ENCODE measurements at regions of chr18 and their contacts with region 1.

Region 1: DNA sequence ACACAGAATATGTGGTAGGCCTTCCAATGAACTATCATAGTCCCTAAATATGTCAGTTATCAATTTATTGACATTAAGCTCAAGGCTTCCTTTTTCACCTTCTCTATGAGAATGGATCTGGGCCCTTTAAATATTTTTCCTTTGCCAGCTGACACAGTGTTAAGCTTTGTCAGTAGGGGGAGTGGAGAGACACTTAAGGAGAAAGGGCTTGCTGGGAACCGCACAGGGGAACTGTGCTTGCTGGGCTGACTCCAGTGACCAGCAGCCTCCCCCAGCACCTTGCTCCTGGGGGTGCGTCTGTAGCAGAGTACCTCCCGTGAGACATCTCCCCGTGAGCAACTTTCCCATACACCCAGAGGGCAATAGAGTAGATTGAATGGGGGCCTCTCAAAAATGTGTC is 6.5 kb upstream of the PTPN2 start:
- DNase-seq: no peak
- ATAC-seq: no peak
- H3K4me3 ChIP-seq: no peak overlapping the region
- H3K4me3 Mint-ChIP-seq: no peak overlapping the region
- H3K27ac ChIP-seq: no peak overlapping the region
- H3K27ac Mint-ChIP-seq: no peak overlapping the region
- H3K4me1 ChIP-seq: no peaks in the 10 kb centered on the region
- H3K4me1 Mint-ChIP-seq: peaks cover 7% of the 10 kb centered on the region
- H3K27me3 ChIP-seq: peaks cover 0 to 6% of the 10 kb centered on the region in 2 experiments
- H3K27me3 Mint-ChIP-seq: peaks cover 12% of the 10 kb centered on the region
- CTCF ChIP-seq: no peak

Region 2: GRCh38 chr18:12744103-12744502 is 146.4 kb before region 1 on chr18:
- CTCF ChIA-PET with region 1: interaction called, 41 read pairs
- POLR2A ChIA-PET with region 1: no interaction called
- intact Hi-C with region 1: loop called (anchors 1 kb)
- DNase-seq: peak in 2 of 9 experiments; percentile 58 to 69
- ATAC-seq: peak; percentile 63
- H3K4me3 ChIP-seq: no peak overlapping the region
- H3K4me3 Mint-ChIP-seq: no peak overlapping the region
- H3K27ac ChIP-seq: no peak overlapping the region
- H3K27ac Mint-ChIP-seq: no peak overlapping the region
- H3K4me1 ChIP-seq: no peaks in the 10 kb centered on the region
- H3K4me1 Mint-ChIP-seq: peaks cover 4% of the 10 kb centered on the region
- H3K27me3 ChIP-seq: no peaks in the 10 kb centered on the region
- H3K27me3 Mint-ChIP-seq: no peaks in the 10 kb centered on the region
- CTCF ChIP-seq: peak; percentile 51

Region 3: DNA sequence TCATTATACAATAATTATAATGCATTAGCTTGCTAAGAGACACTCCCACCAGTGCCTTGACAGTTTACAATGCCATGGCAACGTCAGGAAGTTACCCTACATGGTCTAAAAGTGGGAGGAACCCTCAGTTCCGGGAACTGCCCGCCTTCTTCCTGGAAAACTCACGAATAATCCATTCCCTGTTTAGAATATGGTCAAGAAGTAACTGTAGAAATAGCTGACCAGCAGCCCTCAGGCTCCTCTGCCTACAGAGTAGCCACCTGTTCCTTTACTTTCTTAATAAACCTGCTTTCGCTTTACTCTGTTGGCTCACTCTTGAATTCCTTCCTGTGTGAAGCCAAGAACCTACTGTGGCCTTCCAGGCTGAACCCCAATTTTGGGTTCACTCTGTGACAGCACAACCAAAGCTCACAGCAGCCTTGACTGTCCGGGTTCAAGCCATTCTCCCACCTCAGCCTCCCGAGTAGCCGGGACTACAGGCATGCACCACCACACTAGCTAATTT is 13.6 kb after region 1 on chr18:
- CTCF ChIA-PET with region 1: interaction called, 15 read pairs
- POLR2A ChIA-PET with region 1: interaction called, 5 read pairs
- intact Hi-C with region 1: no loop called
- DNase-seq: peak in 2 of 9 experiments; percentile 54 to 59
- ATAC-seq: peak; percentile 49
- H3K4me3 ChIP-seq: peak overlapping the region in 1 of 2 experiments; percentile 25
- H3K4me3 Mint-ChIP-seq: peak overlapping the region; percentile 74
- H3K27ac ChIP-seq: peak overlapping the region; percentile 26 to 71
- H3K27ac Mint-ChIP-seq: peak overlapping the region; percentile 86
- H3K4me1 ChIP-seq: peaks cover 4% of the 10 kb centered on the region
- H3K4me1 Mint-ChIP-seq: peaks cover 11% of the 10 kb centered on the region
- H3K27me3 ChIP-seq: no peaks in the 10 kb centered on the region
- H3K27me3 Mint-ChIP-seq: no peaks in the 10 kb centered on the region
- CTCF ChIP-seq: no peak

Region 4: DNA sequence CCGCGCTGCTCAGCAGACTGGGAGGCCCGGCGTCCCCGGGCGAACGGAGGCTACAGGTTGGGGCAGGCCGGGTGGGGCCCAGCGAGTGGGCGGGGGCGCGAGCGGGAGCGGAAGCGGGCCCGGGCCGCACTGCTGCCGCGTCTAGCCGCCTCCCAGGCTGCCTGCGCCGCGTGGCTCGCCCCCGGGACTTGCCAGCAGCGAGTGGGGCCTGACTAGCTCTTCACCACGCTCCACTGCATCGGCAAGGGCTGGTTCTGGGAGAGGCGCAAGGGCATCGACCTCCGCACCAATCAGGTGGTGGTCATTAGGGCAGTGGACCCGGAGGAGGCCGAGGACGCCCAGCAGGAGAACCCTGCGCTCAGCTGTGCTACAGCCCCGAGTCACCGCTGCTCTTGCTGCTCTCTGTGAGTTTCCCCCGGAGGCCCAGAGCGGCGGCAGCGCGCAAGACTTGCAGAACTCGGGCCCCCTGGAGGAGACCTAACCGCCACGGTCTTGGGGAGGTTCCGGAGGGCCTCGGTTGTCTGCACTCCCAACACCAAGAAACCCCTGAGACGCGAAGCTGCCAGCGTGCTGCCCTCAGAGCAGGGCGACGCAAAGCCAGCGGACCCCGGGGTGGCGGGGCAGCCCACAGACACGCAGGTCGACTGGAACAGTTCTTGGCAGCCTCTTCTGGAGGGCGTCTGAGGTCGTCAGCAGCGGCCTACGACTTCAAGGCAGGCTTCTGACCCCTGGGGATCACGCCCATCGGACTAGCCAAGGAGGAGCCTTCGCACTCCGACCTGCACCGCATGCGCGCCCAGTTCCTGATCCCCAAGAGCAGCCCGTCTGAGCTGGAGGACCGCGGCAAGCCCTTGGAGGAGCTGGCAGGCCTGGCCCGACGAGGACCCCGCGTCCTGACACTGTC is 20.8 kb after region 1 on chr18:
- CTCF ChIA-PET with region 1: interaction called, 14 read pairs
- POLR2A ChIA-PET with region 1: no interaction called
- intact Hi-C with region 1: no loop called
- DNase-seq: peak; percentile 17 to 81 (median 57)
- ATAC-seq: peak; percentile 92
- H3K4me3 ChIP-seq: peak overlapping the region; percentile 39 to 52
- H3K4me3 Mint-ChIP-seq: peak overlapping the region; percentile 73
- H3K27ac ChIP-seq: peak overlapping the region in 1 of 2 experiments; percentile 46
- H3K27ac Mint-ChIP-seq: peak overlapping the region; percentile 55
- H3K4me1 ChIP-seq: peaks cover 13% of the 10 kb centered on the region
- H3K4me1 Mint-ChIP-seq: peaks cover 9% of the 10 kb centered on the region
- H3K27me3 ChIP-seq: no peaks in the 10 kb centered on the region
- H3K27me3 Mint-ChIP-seq: no peaks in the 10 kb centered on the region
- CTCF ChIP-seq: no peak

Region 5: GRCh38 chr18:12921178-12921577 is 30.7 kb after region 1 on chr18:
- CTCF ChIA-PET with region 1: interaction called, 14 read pairs
- POLR2A ChIA-PET with region 1: interaction called, 4 read pairs
- intact Hi-C with region 1: no loop called
- DNase-seq: peak in 8 of 9 experiments; percentile 13 to 89 (median 51)
- ATAC-seq: peak; percentile 96
- H3K4me3 ChIP-seq: peak overlapping the region in 1 of 2 experiments; percentile 4
- H3K4me3 Mint-ChIP-seq: peak overlapping the region; percentile 53
- H3K27ac ChIP-seq: peak overlapping the region; percentile 25 to 37
- H3K27ac Mint-ChIP-seq: peak overlapping the region; percentile 91
- H3K4me1 ChIP-seq: peaks cover 8% of the 10 kb centered on the region
- H3K4me1 Mint-ChIP-seq: peaks cover 20% of the 10 kb centered on the region
- H3K27me3 ChIP-seq: no peaks in the 10 kb centered on the region
- H3K27me3 Mint-ChIP-seq: no peaks in the 10 kb centered on the region
- CTCF ChIP-seq: no peak

Region 6: GRCh38 chr18:13120983-13121441 is 230.5 kb after region 1 on chr18:
- CTCF ChIA-PET with region 1: no interaction called
- POLR2A ChIA-PET with region 1: no interaction called
- intact Hi-C with region 1: no loop called
- DNase-seq: no peak
- ATAC-seq: no peak
- H3K4me3 ChIP-seq: no peak overlapping the region
- H3K4me3 Mint-ChIP-seq: no peak overlapping the region
- H3K27ac ChIP-seq: no peak overlapping the region
- H3K27ac Mint-ChIP-seq: no peak overlapping the region
- H3K4me1 ChIP-seq: no peaks in the 10 kb centered on the region
- H3K4me1 Mint-ChIP-seq: no peaks in the 10 kb centered on the region
- H3K27me3 ChIP-seq: no peaks in the 10 kb centered on the region
- H3K27me3 Mint-ChIP-seq: no peaks in the 10 kb centered on the region
- CTCF ChIP-seq: no peak

Measured in CD8-positive, alpha-beta T cell (primary cell).